Naive thymus-derived CD4-positive, alpha-beta T cell (primary cell): ENCODE measurements at regions of chr6 and their contacts with region 1.

Region 1: DNA sequence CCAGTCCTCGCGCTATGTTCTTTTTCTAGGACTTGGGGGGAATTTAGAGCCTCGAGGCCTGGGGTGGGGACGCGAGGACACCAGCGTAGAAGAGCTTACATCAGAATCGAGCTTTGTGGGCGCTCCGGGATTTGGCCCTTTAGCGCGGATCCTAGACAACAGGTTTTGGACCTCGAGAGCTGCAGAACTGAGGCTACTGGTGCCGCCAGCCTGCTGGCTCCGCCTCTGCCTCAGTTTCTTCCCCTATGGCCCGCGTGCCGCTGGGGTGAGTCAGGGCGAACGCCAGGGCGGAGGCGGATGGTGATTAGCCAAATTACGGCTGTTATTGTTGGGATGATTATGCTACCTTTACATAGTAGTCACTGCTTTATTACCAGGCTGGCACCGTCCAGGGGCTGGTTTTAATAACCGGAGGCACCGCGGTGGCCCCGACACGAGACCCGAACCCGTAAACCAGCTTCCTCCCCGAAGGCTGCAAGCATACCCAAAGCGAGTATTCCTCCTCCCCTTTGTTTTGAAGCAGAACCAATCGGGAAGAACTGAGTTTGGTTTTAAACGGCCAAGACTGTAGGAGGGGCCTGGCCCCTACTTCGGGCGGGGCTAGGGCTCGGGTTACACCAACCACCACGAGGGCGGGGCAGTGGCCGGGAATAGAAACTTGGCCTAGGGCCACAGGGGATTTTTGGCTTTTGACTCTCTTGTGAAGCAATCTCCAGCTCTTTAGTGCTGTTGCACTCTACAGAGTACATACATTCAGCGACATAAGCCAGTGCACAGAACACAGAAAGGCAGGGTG is 639 bp upstream of the GTPBP2 start:
- DNase-seq: peak; percentile 64 to 90 (median 75)
- ATAC-seq: peak; percentile 79
- H3K4me3 ChIP-seq: peak overlapping the region; percentile 98
- H3K4me3 Mint-ChIP-seq: peak overlapping the region; percentile 97 to 100 (median 99)
- H3K27ac ChIP-seq: peak overlapping the region; percentile 76
- H3K27ac Mint-ChIP-seq: peak overlapping the region; percentile 90 to 99 (median 98)
- H3K4me1 ChIP-seq: peaks cover 9 to 11% of the 10 kb centered on the region in 2 donors
- H3K4me1 Mint-ChIP-seq: peaks cover 30 to 42% (median 38%) of the 10 kb centered on the region in 7 donors
- H3K27me3 ChIP-seq: no peaks in the 10 kb centered on the region
- H3K27me3 Mint-ChIP-seq: no peaks in the 10 kb centered on the region

Region 2: GRCh38 chr6:41735427-41736356 is 1894.0 kb before region 1 on chr6 and contains the start of gene TFEB:
- CTCF ChIA-PET with region 1: no interaction called
- POLR2A ChIA-PET with region 1: no interaction called
- intact Hi-C with region 1: loop called in 1 of 2 experiments (anchors 2 kb)
- DNase-seq: peak; percentile 88 to 98 (median 93)
- ATAC-seq: peak; percentile 87
- H3K4me3 ChIP-seq: peak within 1 kb of the TSS; percentile 57
- H3K4me3 Mint-ChIP-seq: peak within 1 kb of the TSS; percentile 66 to 89 (median 80)
- H3K27ac ChIP-seq: peak within 1 kb of the TSS; percentile 80
- H3K27ac Mint-ChIP-seq: peak within 1 kb of the TSS in 8 of 9 donors; percentile 34 to 84 (median 62)
- H3K4me1 ChIP-seq: peaks cover 32 to 37% of the 10 kb centered on the region in 2 donors
- H3K4me1 Mint-ChIP-seq: peaks cover 13 to 32% (median 24%) of the 10 kb centered on the region in 7 donors
- H3K27me3 ChIP-seq: no peaks in the 10 kb centered on the region
- H3K27me3 Mint-ChIP-seq: no peaks in the 10 kb centered on the region
- total RNA-seq, gene TFEB: 7.4 to 39.9 (median 11.8) TPM

Region 3: GRCh38 chr6:43013843-43014433 is 615.8 kb before region 1 on chr6 and contains the starts of genes KLHDC3 and MEA1:
- CTCF ChIA-PET with region 1: no interaction called
- POLR2A ChIA-PET with region 1: no interaction called
- intact Hi-C with region 1: loop called in 1 of 2 experiments (anchors 5 kb)
- DNase-seq: peak; percentile 83 to 100 (median 99)
- ATAC-seq: peak; percentile 98
- H3K4me3 ChIP-seq: peak within 1 kb of the TSS; percentile 73
- H3K4me3 Mint-ChIP-seq: peak within 1 kb of the TSS; percentile 85 to 99 (median 92)
- H3K27ac ChIP-seq: peak within 1 kb of the TSS; percentile 84
- H3K27ac Mint-ChIP-seq: peak within 1 kb of the TSS; percentile 82 to 97 (median 92)
- H3K4me1 ChIP-seq: peaks cover 20 to 31% of the 10 kb centered on the region in 2 donors
- H3K4me1 Mint-ChIP-seq: peaks cover 45 to 78% (median 58%) of the 10 kb centered on the region in 7 donors
- H3K27me3 ChIP-seq: no peaks in the 10 kb centered on the region
- H3K27me3 Mint-ChIP-seq: peaks cover 0 to 3% (median 0%) of the 10 kb centered on the region in 5 donors
- total RNA-seq, gene KLHDC3: 39.9 to 76.9 (median 67.4) TPM
- total RNA-seq, gene MEA1: 20.3 to 58.0 (median 32.7) TPM

Region 4: DNA sequence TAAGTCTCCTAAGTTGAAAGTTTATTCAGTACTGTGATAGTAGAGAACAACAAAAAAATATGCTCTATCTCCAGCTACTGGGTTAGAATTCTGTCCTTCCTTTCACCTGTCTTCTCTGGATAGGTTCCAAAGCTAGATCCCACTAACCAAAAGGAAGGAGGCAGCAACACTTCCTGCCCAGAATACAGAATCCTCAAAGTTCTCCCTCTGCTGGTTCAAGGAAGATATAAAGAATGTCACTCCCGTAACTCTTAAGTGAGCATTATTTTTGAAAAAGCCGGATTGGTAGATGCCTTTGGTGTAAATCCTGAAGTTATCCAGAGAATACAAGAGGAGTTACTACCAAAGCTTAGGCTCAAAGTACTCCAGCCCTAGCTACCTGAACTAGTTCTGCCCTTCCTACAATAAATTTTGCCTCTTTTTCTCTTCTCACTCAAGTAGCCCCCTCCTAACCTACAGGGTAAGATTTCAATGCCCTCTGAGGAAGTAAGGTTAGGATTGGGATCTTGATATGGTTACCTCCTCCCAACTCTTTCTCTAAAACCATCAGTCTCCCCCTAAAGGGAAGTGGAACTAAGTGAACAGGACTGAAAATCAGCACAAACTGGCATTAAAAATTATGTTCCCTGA is 295.1 kb before region 1 on chr6:
- CTCF ChIA-PET with region 1: no interaction called
- POLR2A ChIA-PET with region 1: no interaction called
- intact Hi-C with region 1: no loop called
- DNase-seq: peak in 1 of 9 donors; percentile 24
- ATAC-seq: no peak
- H3K4me3 ChIP-seq: no peak overlapping the region
- H3K4me3 Mint-ChIP-seq: no peak overlapping the region
- H3K27ac ChIP-seq: no peak overlapping the region
- H3K27ac Mint-ChIP-seq: peak overlapping the region in 5 of 9 donors; percentile 8 to 65 (median 32)
- H3K4me1 ChIP-seq: peaks cover 0 to 15% of the 10 kb centered on the region in 2 donors
- H3K4me1 Mint-ChIP-seq: peaks cover 10 to 38% (median 22%) of the 10 kb centered on the region in 7 donors
- H3K27me3 ChIP-seq: no peaks in the 10 kb centered on the region
- H3K27me3 Mint-ChIP-seq: peaks cover 0 to 3% (median 0%) of the 10 kb centered on the region in 5 donors

Region 5: GRCh38 chr6:43427406-43428111 is 202.1 kb before region 1 on chr6 and contains the start of gene ABCC10:
- CTCF ChIA-PET with region 1: no interaction called
- POLR2A ChIA-PET with region 1: no interaction called
- intact Hi-C with region 1: loop called (anchors 1 to 2 kb)
- DNase-seq: peak; percentile 89 to 98 (median 95)
- ATAC-seq: peak; percentile 97
- H3K4me3 ChIP-seq: peak within 1 kb of the TSS; percentile 77
- H3K4me3 Mint-ChIP-seq: peak within 1 kb of the TSS; percentile 89 to 98 (median 94)
- H3K27ac ChIP-seq: peak within 1 kb of the TSS; percentile 95
- H3K27ac Mint-ChIP-seq: peak within 1 kb of the TSS; percentile 93 to 100 (median 98)
- H3K4me1 ChIP-seq: peaks cover 11 to 12% of the 10 kb centered on the region in 2 donors
- H3K4me1 Mint-ChIP-seq: peaks cover 15 to 36% (median 27%) of the 10 kb centered on the region in 7 donors
- H3K27me3 ChIP-seq: no peaks in the 10 kb centered on the region
- H3K27me3 Mint-ChIP-seq: peaks cover 0 to under 1% (median 0%) of the 10 kb centered on the region in 5 donors
- total RNA-seq, gene ABCC10: 56.2 to 74.6 (median 60.4) TPM

Region 6: DNA sequence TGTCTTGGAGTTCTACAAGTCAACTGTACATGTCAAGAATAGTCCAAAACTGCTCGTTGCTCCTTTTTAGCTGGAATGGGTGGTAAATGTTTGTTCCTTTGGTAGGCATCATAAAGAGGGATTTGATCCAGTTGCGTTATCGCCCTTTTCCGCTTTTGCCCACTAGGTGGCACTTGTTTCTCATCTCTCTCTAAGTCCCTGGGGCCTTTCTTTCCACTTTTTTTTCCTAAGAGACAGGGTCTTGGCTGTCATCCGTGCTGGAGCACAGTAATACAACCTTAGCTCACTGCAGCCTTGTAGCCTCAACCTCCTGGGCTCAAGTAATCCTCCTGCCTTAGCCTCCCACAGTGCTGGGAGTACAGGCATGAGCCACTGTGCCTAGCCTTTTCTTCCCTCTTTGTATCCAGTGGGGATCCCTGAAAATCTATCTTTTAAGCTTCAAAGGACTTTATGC is 21.4 kb before region 1 on chr6:
- CTCF ChIA-PET with region 1: interaction called, 7 read pairs
- POLR2A ChIA-PET with region 1: interaction called, 6 read pairs
- intact Hi-C with region 1: loop called (anchors 2 kb)
- DNase-seq: peak in 8 of 9 donors; percentile 12 to 49 (median 43)
- ATAC-seq: peak; percentile 57
- H3K4me3 ChIP-seq: no peak overlapping the region
- H3K4me3 Mint-ChIP-seq: no peak overlapping the region
- H3K27ac ChIP-seq: no peak overlapping the region
- H3K27ac Mint-ChIP-seq: peak overlapping the region in 4 of 9 donors; percentile 0 to 16 (median 4)
- H3K4me1 ChIP-seq: no peaks in the 10 kb centered on the region
- H3K4me1 Mint-ChIP-seq: peaks cover 0 to 10% (median 5%) of the 10 kb centered on the region in 7 donors
- H3K27me3 ChIP-seq: no peaks in the 10 kb centered on the region
- H3K27me3 Mint-ChIP-seq: no peaks in the 10 kb centered on the region

Region 7: DNA sequence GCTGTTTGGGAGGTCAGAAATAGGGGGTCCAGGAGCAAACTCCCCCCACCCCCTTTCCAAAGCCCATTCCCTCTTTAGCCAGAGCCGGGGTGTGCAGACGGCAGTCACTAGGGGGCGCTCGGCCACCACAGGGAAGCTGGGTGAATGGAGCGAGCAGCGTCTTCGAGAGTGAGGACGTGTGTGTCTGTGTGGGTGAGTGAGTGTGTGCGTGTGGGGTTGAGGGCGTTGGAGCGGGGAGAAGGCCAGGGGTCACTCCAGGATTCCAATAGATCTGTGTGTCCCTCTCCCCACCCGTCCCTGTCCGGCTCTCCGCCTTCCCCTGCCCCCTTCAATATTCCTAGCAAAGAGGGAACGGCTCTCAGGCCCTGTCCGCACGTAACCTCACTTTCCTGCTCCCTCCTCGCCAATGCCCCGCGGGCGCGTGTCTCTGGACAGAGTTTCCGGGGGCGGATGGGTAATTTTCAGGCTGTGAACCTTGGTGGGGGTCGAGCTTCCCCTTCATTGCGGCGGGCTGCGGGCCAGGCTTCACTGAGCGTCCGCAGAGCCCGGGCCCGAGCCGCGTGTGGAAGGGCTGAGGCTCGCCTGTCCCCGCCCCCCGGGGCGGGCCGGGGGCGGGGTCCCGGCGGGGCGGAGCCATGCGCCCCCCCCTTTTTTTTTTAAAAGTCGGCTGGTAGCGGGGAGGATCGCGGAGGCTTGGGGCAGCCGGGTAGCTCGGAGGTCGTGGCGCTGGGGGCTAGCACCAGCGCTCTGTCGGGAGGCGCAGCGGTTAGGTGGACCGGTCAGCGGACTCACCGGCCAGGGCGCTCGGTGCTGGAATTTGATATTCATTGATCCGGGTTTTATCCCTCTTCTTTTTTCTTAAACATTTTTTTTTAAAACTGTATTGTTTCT is 140.1 kb after region 1 on chr6 and contains the start of gene VEGFA:
- CTCF ChIA-PET with region 1: no interaction called
- POLR2A ChIA-PET with region 1: no interaction called
- intact Hi-C with region 1: loop called (anchors 1 to 2 kb)
- DNase-seq: peak; percentile 79 to 93 (median 86)
- ATAC-seq: peak; percentile 91
- H3K4me3 ChIP-seq: peak within 1 kb of the TSS; percentile 73
- H3K4me3 Mint-ChIP-seq: peak within 1 kb of the TSS; percentile 88 to 99 (median 94)
- H3K27ac ChIP-seq: peak within 1 kb of the TSS; percentile 45
- H3K27ac Mint-ChIP-seq: peak within 1 kb of the TSS in 8 of 9 donors; percentile 70 to 85 (median 84)
- H3K4me1 ChIP-seq: peaks cover 3 to 4% of the 10 kb centered on the region in 2 donors
- H3K4me1 Mint-ChIP-seq: peaks cover 8 to 34% (median 16%) of the 10 kb centered on the region in 7 donors
- H3K27me3 ChIP-seq: peaks cover 6 to 8% of the 10 kb centered on the region in 2 donors
- H3K27me3 Mint-ChIP-seq: peaks cover 7 to 21% (median 16%) of the 10 kb centered on the region in 5 donors
- total RNA-seq, gene VEGFA: 0.60 to 72.1 (median 19.4) TPM